ENCODE measurements at regions of chr6 and their contacts with region 1.

Region 1: DNA sequence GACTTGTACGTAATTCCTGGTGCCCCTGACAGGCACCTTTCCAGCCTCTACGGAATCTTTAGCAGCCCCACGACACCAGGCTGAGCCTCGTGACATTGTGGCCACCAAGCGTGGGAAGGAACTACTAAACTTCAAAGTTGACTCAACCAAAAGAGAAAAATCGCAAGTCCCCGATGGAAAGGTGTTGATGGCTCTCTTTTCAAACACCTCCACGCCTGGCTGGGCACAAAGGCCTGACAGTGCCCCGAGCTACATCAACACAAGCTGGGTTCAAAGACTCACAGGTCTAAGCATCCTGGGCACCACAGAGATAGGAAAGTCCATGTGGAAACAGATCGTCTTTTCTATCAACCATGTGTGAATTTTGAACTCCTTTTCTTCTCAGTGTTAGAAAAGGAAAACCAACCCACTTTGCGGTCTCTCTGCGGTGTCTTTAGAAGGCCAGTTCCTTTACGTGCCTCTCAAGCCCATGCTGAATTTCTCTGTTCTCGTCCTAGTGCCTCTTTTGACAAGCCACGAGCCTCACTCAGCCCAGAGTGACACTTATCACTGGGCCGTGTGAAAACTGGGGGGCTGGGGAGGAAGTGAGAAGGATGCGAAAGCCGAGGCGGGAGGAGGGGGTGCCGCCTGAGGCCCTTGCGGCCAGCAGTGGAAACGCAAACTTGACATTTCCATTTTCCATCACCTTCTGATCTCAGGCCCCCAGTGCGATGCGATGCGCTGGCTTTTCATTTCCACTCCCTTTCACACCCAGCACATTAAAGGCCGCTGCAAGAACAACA is 59.4 kb downstream of the GFOD1 start:
- DNase-seq: peak; percentile 94
- ATAC-seq: peak; percentile 78
- H3K4me3 Mint-ChIP-seq: peak overlapping the region; percentile 54
- H3K27ac Mint-ChIP-seq: peak overlapping the region; percentile 97
- H3K4me1 Mint-ChIP-seq: peaks cover 82% of the 10 kb centered on the region
- H3K27me3 Mint-ChIP-seq: no peaks in the 10 kb centered on the region
- CTCF ChIP-seq: peak; percentile 47

Region 2: GRCh38 chr6:13454286-13455221 is 26.6 kb after region 1 on chr6:
- CTCF ChIA-PET with region 1: interaction called, 13 read pairs
- POLR2A ChIA-PET with region 1: interaction called, 9 read pairs
- intact Hi-C with region 1: loop called (anchors 1 kb)
- DNase-seq: peak; percentile 91
- ATAC-seq: peak; percentile 62
- H3K4me3 Mint-ChIP-seq: peak overlapping the region; percentile 9
- H3K27ac Mint-ChIP-seq: peak overlapping the region; percentile 87
- H3K4me1 Mint-ChIP-seq: peaks cover 71% of the 10 kb centered on the region
- H3K27me3 Mint-ChIP-seq: no peaks in the 10 kb centered on the region
- CTCF ChIP-seq: no peak

Region 3: GRCh38 chr6:13466304-13467215 is 38.6 kb after region 1 on chr6:
- CTCF ChIA-PET with region 1: interaction called, 4 read pairs
- POLR2A ChIA-PET with region 1: interaction called, 4 read pairs
- intact Hi-C with region 1: loop called (anchors 5 kb)
- DNase-seq: peak; percentile 80
- ATAC-seq: peak; percentile 91
- H3K4me3 Mint-ChIP-seq: no peak overlapping the region
- H3K27ac Mint-ChIP-seq: peak overlapping the region; percentile 80
- H3K4me1 Mint-ChIP-seq: peaks cover 61% of the 10 kb centered on the region
- H3K27me3 Mint-ChIP-seq: no peaks in the 10 kb centered on the region
- CTCF ChIP-seq: no peak

Measured in activated CD8-positive, alpha-beta T cell treated with anti-CD3 and anti-CD28 coated beads for 36 hours (primary cell).